ENCODE measurements at regions of chr17 and their contacts with region 1.

Region 1: DNA sequence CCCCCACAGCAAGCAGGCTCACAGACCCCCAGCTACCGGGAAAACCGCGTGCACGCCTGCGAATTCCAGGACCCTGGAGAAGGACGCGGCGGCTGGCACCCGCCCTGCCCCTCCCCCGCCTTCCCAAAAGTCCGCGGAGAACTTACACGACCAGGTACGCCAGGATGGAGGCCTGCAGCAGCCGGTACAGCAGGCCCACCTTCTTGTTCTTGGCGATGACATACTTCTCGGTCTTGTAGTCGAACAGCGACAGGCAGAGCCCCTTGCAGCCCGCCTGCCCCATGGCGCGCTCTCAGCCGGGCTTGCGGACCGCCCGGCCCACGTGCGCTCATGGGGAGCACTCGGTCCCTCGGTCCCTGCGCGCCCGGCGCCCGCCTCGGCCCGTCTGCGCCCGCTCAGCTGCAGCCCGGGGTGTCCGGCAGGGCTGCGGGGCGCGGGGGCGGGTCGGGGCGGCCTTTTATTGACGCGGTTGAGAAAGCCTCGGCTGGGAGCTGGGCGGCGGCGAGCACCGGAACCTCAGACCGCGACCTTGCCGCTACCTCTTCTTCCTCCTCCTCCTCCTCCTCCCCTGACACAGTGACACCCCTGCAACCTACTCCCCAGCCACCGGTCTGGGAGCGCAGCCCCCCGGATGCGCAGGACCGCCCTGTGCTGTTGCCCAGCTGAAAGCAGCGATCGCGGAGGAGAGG is at the start of gene P2RX5:
- DNase-seq: peak; percentile 61
- H3K4me3 Mint-ChIP-seq: peak within 1 kb of the TSS; percentile 85
- H3K27ac Mint-ChIP-seq: peak within 1 kb of the TSS; percentile 79
- H3K4me1 Mint-ChIP-seq: peaks cover 34% of the 10 kb centered on the region
- H3K27me3 Mint-ChIP-seq: no peaks in the 10 kb centered on the region
- total RNA-seq, gene P2RX5: 30.8 to 31.1 TPM

Region 2: GRCh38 chr17:3656755-3657587 is 38.9 kb before region 1 on chr17:
- CTCF ChIA-PET with region 1: no interaction called
- POLR2A ChIA-PET with region 1: no interaction called
- DNase-seq: no peak
- H3K4me3 Mint-ChIP-seq: no peak overlapping the region
- H3K27ac Mint-ChIP-seq: no peak overlapping the region
- H3K4me1 Mint-ChIP-seq: no peaks in the 10 kb centered on the region
- H3K27me3 Mint-ChIP-seq: no peaks in the 10 kb centered on the region

Region 3: DNA sequence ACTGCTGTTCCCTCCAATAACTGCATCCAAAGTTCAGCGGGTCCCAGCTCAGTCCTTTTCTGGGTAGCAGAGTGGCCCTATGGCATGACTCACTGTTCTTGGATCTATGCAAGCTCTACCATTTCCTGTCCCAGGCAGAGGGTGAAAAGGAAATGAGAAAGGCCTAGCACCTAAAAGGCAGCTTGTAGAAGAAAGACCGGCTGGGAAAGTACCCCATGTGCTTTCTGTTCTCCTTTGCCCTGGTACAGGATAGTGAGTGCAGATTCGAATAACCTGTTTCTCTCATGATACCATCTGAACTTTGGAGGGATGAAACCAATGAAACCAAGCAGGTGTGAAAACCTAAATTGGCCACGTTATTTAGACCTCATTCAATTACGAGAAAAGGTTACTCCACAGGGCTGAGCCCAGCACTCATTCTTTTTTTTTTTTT is 15.1 kb after region 1 on chr17:
- CTCF ChIA-PET with region 1: interaction called, 6 read pairs
- POLR2A ChIA-PET with region 1: interaction called, 74 read pairs
- DNase-seq: peak; percentile 82
- H3K4me3 Mint-ChIP-seq: peak overlapping the region; percentile 68
- H3K27ac Mint-ChIP-seq: peak overlapping the region; percentile 97
- H3K4me1 Mint-ChIP-seq: peaks cover 59% of the 10 kb centered on the region
- H3K27me3 Mint-ChIP-seq: no peaks in the 10 kb centered on the region

Measured in activated CD4-positive, alpha-beta memory T cell treated with anti-CD3 and anti-CD28 coated beads, Interleukin-2, amount 10 ng/mL, durations not matched to agents 7 days and 5 days (primary cell).